Panc1 (cell line): ENCODE measurements at regions of chr6 and their contacts with region 1.

Region 1: GRCh38 chr6:28506807-28507475 is 8.7 kb downstream of the GPX6 start:
- DNase-seq: no peak
- ATAC-seq: no peak
- H3K4me3 ChIP-seq: no peak overlapping the region
- H3K27ac ChIP-seq: no peak overlapping the region
- H3K4me1 ChIP-seq: no peaks in the 10 kb centered on the region
- H3K27me3 ChIP-seq: peaks cover 11% of the 10 kb centered on the region
- CTCF ChIP-seq: no peak

Region 2: DNA sequence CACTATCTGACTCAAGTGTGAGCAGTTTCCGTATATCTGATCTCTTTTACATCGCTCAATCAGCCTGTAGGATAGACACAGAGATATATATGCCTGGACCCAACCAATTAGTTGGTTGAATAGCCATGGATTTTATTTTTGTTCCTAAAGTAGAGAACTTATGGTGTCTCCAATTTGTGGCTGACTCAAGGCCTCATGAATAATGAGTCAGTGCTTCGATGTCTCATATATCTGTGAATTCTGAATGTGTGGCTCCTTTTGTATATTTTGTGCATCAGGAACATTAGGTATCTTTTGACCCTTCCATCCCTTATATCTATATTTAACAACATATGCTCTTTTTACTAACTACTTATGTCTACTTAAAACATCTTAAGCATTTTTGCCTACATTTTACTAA is 659.2 kb before region 1 on chr6:
- CTCF ChIA-PET with region 1: no interaction called
- POLR2A ChIA-PET with region 1: interaction called, 17 read pairs
- in situ Hi-C with region 1: no loop called
- intact Hi-C with region 1: no loop called
- DNase-seq: no peak
- ATAC-seq: no peak
- H3K4me3 ChIP-seq: no peak overlapping the region
- H3K27ac ChIP-seq: no peak overlapping the region
- H3K4me1 ChIP-seq: no peaks in the 10 kb centered on the region
- H3K27me3 ChIP-seq: no peaks in the 10 kb centered on the region
- CTCF ChIP-seq: no peak

Region 3: GRCh38 chr6:28523241-28523622 is 16.3 kb after region 1 on chr6:
- CTCF ChIA-PET with region 1: no interaction called
- POLR2A ChIA-PET with region 1: interaction called, 12 read pairs
- in situ Hi-C with region 1: no loop called
- intact Hi-C with region 1: no loop called
- DNase-seq: no peak
- ATAC-seq: no peak
- H3K4me3 ChIP-seq: no peak overlapping the region
- H3K27ac ChIP-seq: no peak overlapping the region
- H3K4me1 ChIP-seq: no peaks in the 10 kb centered on the region
- H3K27me3 ChIP-seq: peaks cover 27% of the 10 kb centered on the region
- CTCF ChIP-seq: no peak